ENCODE measurements at regions of chr14 and their contacts with region 1.

Region 1: DNA sequence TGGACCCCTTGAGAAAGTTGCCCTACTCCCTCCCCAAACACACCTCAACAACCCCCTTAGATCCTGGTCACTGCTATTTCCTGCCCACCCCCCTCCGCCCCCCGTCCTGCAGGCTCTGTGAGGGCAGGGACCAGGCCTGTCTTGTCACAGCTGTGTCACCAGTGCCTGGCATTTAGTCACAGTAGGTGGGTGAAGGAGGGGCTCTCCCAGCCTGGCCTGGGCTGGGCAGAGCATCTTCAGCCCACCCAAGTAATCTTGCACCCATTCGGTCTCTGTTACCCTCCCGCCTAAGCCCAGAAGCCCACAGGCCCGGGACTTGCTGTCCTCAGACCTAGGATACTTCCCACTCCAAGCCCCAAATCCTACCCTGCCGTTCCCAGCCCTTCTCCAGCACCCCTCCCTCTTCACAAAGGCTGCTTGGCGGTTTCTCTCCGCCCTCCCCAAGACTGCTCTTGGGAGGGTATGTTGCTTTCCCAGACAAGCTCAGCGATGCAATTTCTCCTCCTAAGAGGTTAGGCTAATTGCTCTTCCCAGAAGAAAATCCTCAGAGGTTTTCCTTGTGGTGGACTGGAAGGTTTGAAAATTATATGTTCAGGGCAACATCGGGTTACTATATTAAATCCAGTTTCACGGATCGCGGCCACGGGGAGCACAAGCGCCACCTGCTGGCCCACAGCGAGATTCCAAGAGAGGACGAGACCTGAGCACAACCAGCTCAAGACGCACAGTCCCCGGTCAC is 50.8 kb upstream of the ZFP36L1 start:
- DNase-seq: peak; percentile 61 to 72 (median 66)
- H3K4me3 ChIP-seq: no peak overlapping the region
- H3K4me3 Mint-ChIP-seq: peak overlapping the region in 4 of 8 donors; percentile 39 to 75 (median 55)
- H3K27ac ChIP-seq: no peak overlapping the region
- H3K27ac Mint-ChIP-seq: peak overlapping the region in 4 of 7 donors; percentile 11 to 72 (median 59)
- H3K4me1 ChIP-seq: peaks cover 28% of the 10 kb centered on the region
- H3K4me1 Mint-ChIP-seq: peaks cover 18 to 37% (median 26%) of the 10 kb centered on the region in 4 donors
- H3K27me3 ChIP-seq: no peaks in the 10 kb centered on the region
- H3K27me3 Mint-ChIP-seq: peaks cover 1 to 2% of the 10 kb centered on the region in 2 donors

Region 2: DNA sequence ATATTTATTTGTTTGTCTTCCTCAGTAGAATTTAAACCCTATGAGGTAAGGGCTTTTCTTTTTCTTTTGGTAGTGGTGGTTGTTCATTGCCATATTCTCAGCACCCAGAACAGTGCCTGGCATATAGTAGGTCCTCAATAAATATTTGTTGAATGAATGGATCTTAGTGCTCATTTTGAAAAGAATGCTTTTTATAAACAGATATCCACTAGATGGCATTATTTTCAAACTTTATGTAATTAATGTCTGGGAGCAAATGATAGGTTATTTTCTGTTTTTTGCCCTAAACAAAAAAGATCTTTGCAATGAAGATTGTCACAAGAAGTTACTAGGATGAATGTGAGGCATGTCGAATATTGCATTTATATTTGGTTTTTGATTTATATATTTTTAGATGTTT is 959.9 kb before region 1 on chr14:
- CTCF ChIA-PET with region 1: interaction called, 34 read pairs
- POLR2A ChIA-PET with region 1: interaction called, 4 read pairs
- intact Hi-C with region 1: loop called (anchors 1 kb)
- DNase-seq: peak in 3 of 5 donors; percentile 6 to 11 (median 6)
- H3K4me3 ChIP-seq: no peak overlapping the region
- H3K4me3 Mint-ChIP-seq: no peak overlapping the region
- H3K27ac ChIP-seq: no peak overlapping the region
- H3K27ac Mint-ChIP-seq: no peak overlapping the region
- H3K4me1 ChIP-seq: no peaks in the 10 kb centered on the region
- H3K4me1 Mint-ChIP-seq: peaks cover 0 to 13% (median 10%) of the 10 kb centered on the region in 4 donors
- H3K27me3 ChIP-seq: no peaks in the 10 kb centered on the region
- H3K27me3 Mint-ChIP-seq: no peaks in the 10 kb centered on the region

Region 3: GRCh38 chr14:67943947-67944346 is 899.7 kb before region 1 on chr14:
- CTCF ChIA-PET with region 1: interaction called, 90 read pairs
- POLR2A ChIA-PET with region 1: interaction called, 5 read pairs
- intact Hi-C with region 1: loop called (anchors 1 kb)
- DNase-seq: peak; percentile 47 to 65 (median 53)
- H3K4me3 ChIP-seq: no peak overlapping the region
- H3K4me3 Mint-ChIP-seq: no peak overlapping the region
- H3K27ac ChIP-seq: no peak overlapping the region
- H3K27ac Mint-ChIP-seq: no peak overlapping the region
- H3K4me1 ChIP-seq: no peaks in the 10 kb centered on the region
- H3K4me1 Mint-ChIP-seq: no peaks in the 10 kb centered on the region
- H3K27me3 ChIP-seq: no peaks in the 10 kb centered on the region
- H3K27me3 Mint-ChIP-seq: no peaks in the 10 kb centered on the region

Region 4: GRCh38 chr14:68703093-68703492 is 140.5 kb before region 1 on chr14:
- CTCF ChIA-PET with region 1: no interaction called
- POLR2A ChIA-PET with region 1: no interaction called
- intact Hi-C with region 1: no loop called
- DNase-seq: no peak
- H3K4me3 ChIP-seq: no peak overlapping the region
- H3K4me3 Mint-ChIP-seq: no peak overlapping the region
- H3K27ac ChIP-seq: no peak overlapping the region
- H3K27ac Mint-ChIP-seq: peak overlapping the region in 1 of 7 donors; percentile 51
- H3K4me1 ChIP-seq: peaks cover 8% of the 10 kb centered on the region
- H3K4me1 Mint-ChIP-seq: peaks cover 0 to 5% (median 0%) of the 10 kb centered on the region in 4 donors
- H3K27me3 ChIP-seq: no peaks in the 10 kb centered on the region
- H3K27me3 Mint-ChIP-seq: no peaks in the 10 kb centered on the region

Region 5: DNA sequence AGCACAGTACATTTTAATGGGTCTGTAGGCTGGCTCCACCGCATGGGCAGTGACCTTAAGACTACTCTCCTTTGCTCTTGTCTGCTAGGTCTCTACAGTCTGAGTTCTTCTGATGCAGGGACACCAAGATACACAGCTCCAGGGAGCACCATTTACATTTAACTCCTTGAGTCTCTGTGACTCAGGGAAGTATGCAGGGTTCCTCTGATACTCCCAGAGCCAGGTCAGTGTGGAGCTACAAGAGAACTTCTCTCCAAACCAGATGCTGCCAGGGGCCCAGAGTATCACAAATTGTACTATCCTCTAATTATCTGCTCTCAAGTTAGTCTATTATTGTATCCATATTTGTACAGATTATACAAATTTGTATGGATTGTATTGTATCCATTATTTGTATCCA is 66.0 kb before region 1 on chr14:
- CTCF ChIA-PET with region 1: no interaction called
- POLR2A ChIA-PET with region 1: no interaction called
- intact Hi-C with region 1: no loop called
- DNase-seq: no peak
- H3K4me3 ChIP-seq: no peak overlapping the region
- H3K4me3 Mint-ChIP-seq: peak overlapping the region in 2 of 8 donors; percentile 26 to 47
- H3K27ac ChIP-seq: no peak overlapping the region
- H3K27ac Mint-ChIP-seq: peak overlapping the region in 5 of 7 donors; percentile 63 to 98 (median 93)
- H3K4me1 ChIP-seq: peaks cover 90% of the 10 kb centered on the region
- H3K4me1 Mint-ChIP-seq: peaks cover 60 to 99% (median 77%) of the 10 kb centered on the region in 4 donors
- H3K27me3 ChIP-seq: no peaks in the 10 kb centered on the region
- H3K27me3 Mint-ChIP-seq: no peaks in the 10 kb centered on the region

Region 6: DNA sequence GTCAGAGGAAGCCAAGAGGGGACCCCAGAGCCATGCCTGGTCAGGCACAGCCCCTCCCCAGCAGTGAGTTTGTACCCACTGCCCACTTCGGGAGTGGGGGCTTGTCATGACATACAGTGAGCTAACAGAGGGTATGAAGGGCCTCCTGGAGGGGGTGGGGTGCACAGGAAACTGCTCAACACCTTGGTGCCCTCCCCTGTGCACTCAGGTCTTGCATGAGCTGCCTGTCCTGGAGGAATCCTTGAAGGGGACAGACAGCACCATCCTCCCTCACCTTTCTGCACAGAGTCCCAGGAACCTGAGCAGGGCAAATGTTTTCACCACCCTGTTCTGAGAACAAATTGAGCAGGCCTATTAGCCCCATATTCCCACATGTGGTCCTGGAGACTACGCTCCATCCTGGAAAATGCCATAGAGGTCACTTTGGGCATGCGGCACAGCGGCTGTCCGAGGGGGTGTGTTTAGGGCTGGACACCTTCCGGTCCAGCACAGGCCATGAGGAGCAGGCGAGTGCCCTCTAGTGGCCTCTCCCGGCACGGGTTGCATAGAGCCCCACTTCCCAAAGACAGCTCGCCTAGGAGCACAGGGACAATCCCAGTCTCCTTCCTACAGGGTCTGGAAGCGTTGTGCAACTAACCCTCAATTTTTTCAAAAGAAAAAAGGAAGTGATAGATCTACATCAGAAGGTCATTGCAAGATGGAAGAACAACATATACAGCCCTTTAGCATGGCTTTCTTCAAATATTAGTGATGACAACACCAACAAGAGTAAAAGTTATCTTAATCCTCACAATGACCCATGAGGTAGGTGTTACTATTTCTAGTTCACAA is 18.9 kb before region 1 on chr14:
- CTCF ChIA-PET with region 1: interaction called, 76 read pairs
- POLR2A ChIA-PET with region 1: no interaction called
- intact Hi-C with region 1: no loop called
- DNase-seq: no peak
- H3K4me3 ChIP-seq: no peak overlapping the region
- H3K4me3 Mint-ChIP-seq: no peak overlapping the region
- H3K27ac ChIP-seq: no peak overlapping the region
- H3K27ac Mint-ChIP-seq: peak overlapping the region in 1 of 7 donors; percentile 57
- H3K4me1 ChIP-seq: peaks cover 39% of the 10 kb centered on the region
- H3K4me1 Mint-ChIP-seq: peaks cover 16 to 46% (median 30%) of the 10 kb centered on the region in 4 donors
- H3K27me3 ChIP-seq: no peaks in the 10 kb centered on the region
- H3K27me3 Mint-ChIP-seq: no peaks in the 10 kb centered on the region

Region 7: DNA sequence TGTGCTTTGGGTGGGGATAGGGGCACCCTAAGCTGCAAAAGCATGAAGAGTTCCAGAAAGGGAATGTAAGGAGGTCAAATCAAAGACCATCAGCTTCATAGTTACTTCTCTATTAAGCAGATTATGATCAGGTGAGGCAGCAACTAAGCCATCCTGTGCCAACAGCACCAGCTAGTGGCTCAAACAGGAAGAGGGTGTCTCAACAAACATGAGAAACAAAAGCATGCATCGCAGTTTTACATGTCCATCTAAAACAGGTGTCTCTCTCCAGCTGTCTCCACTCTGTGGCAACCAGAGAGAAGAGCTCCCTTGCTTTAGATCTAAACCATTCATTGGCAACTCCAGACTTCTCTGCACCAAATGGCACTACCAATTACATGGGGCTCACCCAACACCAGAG is 82.6 kb after region 1 on chr14:
- CTCF ChIA-PET with region 1: no interaction called
- POLR2A ChIA-PET with region 1: no interaction called
- intact Hi-C with region 1: no loop called
- DNase-seq: no peak
- H3K4me3 ChIP-seq: no peak overlapping the region
- H3K4me3 Mint-ChIP-seq: no peak overlapping the region
- H3K27ac ChIP-seq: no peak overlapping the region
- H3K27ac Mint-ChIP-seq: peak overlapping the region in 1 of 7 donors; percentile 39
- H3K4me1 ChIP-seq: no peaks in the 10 kb centered on the region
- H3K4me1 Mint-ChIP-seq: peaks cover 10 to 26% (median 18%) of the 10 kb centered on the region in 4 donors
- H3K27me3 ChIP-seq: no peaks in the 10 kb centered on the region
- H3K27me3 Mint-ChIP-seq: no peaks in the 10 kb centered on the region

Region 8: GRCh38 chr14:68939893-68940613 is 96.4 kb after region 1 on chr14:
- CTCF ChIA-PET with region 1: no interaction called
- POLR2A ChIA-PET with region 1: no interaction called
- intact Hi-C with region 1: no loop called
- DNase-seq: no peak
- H3K4me3 ChIP-seq: no peak overlapping the region
- H3K4me3 Mint-ChIP-seq: no peak overlapping the region
- H3K27ac ChIP-seq: no peak overlapping the region
- H3K27ac Mint-ChIP-seq: peak overlapping the region in 2 of 7 donors; percentile 8 to 14
- H3K4me1 ChIP-seq: peaks cover 27% of the 10 kb centered on the region
- H3K4me1 Mint-ChIP-seq: peaks cover 8 to 51% (median 29%) of the 10 kb centered on the region in 4 donors
- H3K27me3 ChIP-seq: no peaks in the 10 kb centered on the region
- H3K27me3 Mint-ChIP-seq: no peaks in the 10 kb centered on the region

Measured in CD4-positive, alpha-beta memory T cell (primary cell).